Activated CD4-positive, alpha-beta memory T cell treated with anti-CD3 and anti-CD28 coated beads for 36 hours (primary cell): ENCODE measurements at regions of chr12 and their contacts with region 1.

Region 1: DNA sequence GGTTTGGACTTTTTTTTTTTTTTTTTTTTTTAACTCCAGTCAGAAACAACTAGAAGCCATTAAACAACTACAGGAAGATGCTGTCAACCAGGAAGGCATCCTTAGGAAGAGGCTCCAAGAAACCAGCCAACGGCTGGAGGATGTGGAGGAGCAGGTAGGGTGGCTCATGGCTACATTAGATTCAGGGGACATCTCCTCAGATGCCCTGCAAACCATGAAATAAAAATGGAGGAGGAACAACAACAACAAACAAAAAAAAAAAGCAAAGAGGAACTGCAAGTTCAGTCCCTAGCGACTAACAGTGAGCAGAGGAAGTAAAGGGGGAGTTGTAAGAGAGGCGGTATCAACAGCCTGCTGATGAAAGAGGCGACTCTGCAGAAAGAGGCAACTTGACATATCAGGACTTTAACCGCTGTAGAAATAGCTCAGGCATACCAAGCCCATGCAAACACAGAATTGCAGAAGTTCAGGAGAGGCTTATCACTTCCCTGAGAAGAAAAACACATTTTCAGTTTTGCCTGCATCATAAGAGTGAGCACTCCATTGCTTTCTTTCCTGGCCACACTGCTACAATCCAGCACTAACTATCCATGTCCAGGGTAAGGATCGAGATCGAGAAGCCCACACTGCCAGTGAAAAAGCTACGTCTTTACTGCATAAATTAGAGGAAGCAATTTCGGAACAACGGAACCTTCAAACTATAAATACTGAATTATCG is 103.5 kb upstream of the BCAT1 start:
- DNase-seq: peak; percentile 54
- H3K4me3 Mint-ChIP-seq: peak overlapping the region; percentile 91
- H3K27ac Mint-ChIP-seq: peak overlapping the region; percentile 97
- H3K4me1 Mint-ChIP-seq: peaks cover 41% of the 10 kb centered on the region
- H3K27me3 Mint-ChIP-seq: no peaks in the 10 kb centered on the region

Region 2: DNA sequence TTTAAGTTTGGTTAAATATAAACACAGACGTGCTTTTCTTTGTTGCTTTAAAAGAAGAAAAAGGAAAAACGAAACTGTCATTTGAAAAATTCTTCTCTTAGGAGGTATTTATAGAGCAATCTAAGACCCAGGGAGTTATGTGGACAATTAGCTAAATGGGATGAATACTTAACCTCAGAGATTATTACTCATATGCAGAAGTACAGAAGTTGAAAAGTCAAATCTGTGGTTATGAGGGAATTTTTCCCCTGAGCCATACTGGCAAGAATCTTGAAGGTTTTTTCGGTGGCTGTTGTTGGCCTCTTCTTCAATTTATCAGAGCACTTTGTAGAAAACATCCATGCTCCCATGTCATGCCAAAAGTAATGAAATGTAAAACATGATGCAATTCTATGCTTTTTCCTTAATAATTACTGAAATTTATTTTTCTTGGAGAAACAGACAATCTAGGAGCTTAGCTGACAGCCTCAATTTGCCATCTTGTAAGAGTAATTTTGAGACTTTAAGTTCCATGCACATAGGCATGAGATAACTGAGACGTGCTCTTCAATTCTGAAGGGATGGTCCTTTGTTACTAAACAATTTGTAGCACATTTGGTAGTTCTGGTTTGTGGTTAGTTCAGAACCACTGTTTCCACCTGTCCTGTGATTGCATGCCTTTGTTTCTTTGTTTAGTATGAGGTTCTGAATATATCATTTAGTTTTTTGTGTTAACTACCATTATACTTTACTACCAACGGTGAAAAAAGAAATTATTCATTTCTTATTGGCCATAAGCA is 230.0 kb before region 1 on chr12:
- CTCF ChIA-PET with region 1: no interaction called
- POLR2A ChIA-PET with region 1: no interaction called
- intact Hi-C with region 1: loop called (anchors 5 kb)
- DNase-seq: no peak
- H3K4me3 Mint-ChIP-seq: no peak overlapping the region
- H3K27ac Mint-ChIP-seq: peak overlapping the region; percentile 50
- H3K4me1 Mint-ChIP-seq: peaks cover 30% of the 10 kb centered on the region
- H3K27me3 Mint-ChIP-seq: no peaks in the 10 kb centered on the region

Region 3: DNA sequence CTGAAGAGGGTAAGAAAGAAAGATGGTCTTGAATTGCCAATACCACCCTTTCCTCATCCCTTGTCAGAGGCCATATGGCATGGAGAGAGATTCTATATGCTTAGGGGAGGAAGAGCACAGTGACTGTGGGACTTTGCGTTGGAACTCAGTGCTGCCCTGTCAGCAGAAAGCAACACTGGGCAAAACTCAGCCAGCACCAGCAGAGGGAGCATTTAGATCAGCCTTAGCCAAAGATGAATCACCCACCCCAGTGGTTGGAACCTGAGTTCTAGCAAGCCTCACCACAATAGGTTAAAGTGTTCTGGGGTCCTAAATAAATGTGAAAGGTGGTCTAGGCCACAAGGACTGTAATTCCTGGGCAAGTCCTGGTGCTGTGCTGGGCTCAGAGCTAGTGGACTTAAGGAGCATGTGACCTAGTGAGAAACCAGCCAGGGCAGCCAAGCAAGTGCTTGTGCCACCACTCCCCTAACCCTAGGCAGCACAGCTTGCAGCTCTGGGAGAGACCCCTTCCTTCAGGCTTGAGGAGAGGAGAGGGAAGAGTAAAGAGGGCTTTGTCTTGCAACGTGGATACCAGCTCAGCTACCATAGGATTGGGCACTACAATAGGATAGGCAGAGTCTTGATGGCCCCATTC is 92.0 kb before region 1 on chr12:
- CTCF ChIA-PET with region 1: interaction called, 3 read pairs
- POLR2A ChIA-PET with region 1: interaction called, 3 read pairs
- intact Hi-C with region 1: loop called (anchors 1 kb)
- DNase-seq: peak; percentile 71
- H3K4me3 Mint-ChIP-seq: no peak overlapping the region
- H3K27ac Mint-ChIP-seq: no peak overlapping the region
- H3K4me1 Mint-ChIP-seq: peaks cover 14% of the 10 kb centered on the region
- H3K27me3 Mint-ChIP-seq: peaks cover 10% of the 10 kb centered on the region

Region 4: GRCh38 chr12:25063873-25064628 is 11.7 kb after region 1 on chr12:
- CTCF ChIA-PET with region 1: interaction called, 3 read pairs
- POLR2A ChIA-PET with region 1: interaction called, 5 read pairs
- intact Hi-C with region 1: loop called (anchors 1 kb)
- DNase-seq: no peak
- H3K4me3 Mint-ChIP-seq: no peak overlapping the region
- H3K27ac Mint-ChIP-seq: no peak overlapping the region
- H3K4me1 Mint-ChIP-seq: peaks cover 38% of the 10 kb centered on the region
- H3K27me3 Mint-ChIP-seq: no peaks in the 10 kb centered on the region

Region 5: GRCh38 chr12:25195056-25195971 is 143.0 kb after region 1 on chr12 and contains the starts of genes DNAI7 and ETFRF1:
- CTCF ChIA-PET with region 1: no interaction called
- POLR2A ChIA-PET with region 1: interaction called, 3 read pairs
- intact Hi-C with region 1: loop called (anchors 2 kb)
- DNase-seq: peak; percentile 97
- H3K4me3 Mint-ChIP-seq: peak within 1 kb of the TSS; percentile 95
- H3K27ac Mint-ChIP-seq: peak within 1 kb of the TSS; percentile 92
- H3K4me1 Mint-ChIP-seq: peaks cover 21% of the 10 kb centered on the region
- H3K27me3 Mint-ChIP-seq: no peaks in the 10 kb centered on the region
- total RNA-seq, gene DNAI7: 0.10 TPM in 1 of 2 experiments, not detected in the other
- total RNA-seq, gene ETFRF1: 9.8 to 10.1 TPM

Region 6: DNA sequence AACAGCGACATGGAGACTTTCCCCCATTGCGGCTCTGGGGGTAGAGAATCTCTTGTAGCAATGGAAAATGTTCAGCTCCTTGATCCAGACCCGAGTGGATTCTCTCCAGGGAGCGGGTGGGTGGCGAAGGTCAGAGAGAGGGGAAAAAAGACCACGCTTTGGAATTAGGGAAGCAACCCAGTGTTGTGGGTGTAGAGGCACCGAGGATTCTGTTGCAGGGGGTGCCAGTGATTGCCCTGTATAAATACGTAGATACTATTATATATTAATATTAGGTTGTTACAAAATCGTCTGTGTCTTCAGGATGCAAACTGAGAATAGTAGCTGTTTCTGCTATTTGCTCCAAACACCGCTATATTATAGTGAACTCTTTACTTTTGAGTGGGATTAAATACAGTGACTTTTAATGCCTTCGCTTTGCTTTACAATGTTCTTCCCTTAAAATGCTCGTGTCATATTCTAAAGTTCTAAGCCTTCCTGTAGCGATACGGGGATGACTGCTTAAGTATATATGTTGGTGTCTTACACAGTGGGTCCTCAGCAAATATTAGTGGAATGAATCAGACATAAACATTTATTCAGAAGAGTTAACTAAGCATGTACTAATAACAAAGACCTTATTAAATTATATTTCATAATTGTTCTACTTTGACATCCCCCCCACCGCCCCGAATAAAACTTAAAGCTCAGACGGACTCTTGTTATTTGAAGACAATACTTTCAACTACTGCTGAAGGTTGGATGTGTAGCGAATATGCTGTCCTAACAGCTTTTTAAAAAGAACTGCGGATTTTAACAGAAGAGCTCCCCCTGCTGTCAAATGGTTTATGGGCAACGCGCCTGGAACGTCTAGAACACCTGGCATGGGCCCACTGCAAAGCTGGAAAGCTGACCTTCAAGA is 334.7 kb after region 1 on chr12:
- CTCF ChIA-PET with region 1: interaction called, 16 read pairs
- POLR2A ChIA-PET with region 1: interaction called, 3 read pairs
- intact Hi-C with region 1: no loop called
- DNase-seq: peak; percentile 82
- H3K4me3 Mint-ChIP-seq: peak overlapping the region; percentile 86
- H3K27ac Mint-ChIP-seq: peak overlapping the region; percentile 95
- H3K4me1 Mint-ChIP-seq: peaks cover 44% of the 10 kb centered on the region
- H3K27me3 Mint-ChIP-seq: no peaks in the 10 kb centered on the region